GM18951 (cell line): ENCODE measurements at regions of chr10 and their contacts with region 1.

Region 1: GRCh38 chr10:75099952-75100763 is 11.3 kb upstream of the SAMD8 start:
- POLR2A ChIP-seq: no peak

Region 2: DNA sequence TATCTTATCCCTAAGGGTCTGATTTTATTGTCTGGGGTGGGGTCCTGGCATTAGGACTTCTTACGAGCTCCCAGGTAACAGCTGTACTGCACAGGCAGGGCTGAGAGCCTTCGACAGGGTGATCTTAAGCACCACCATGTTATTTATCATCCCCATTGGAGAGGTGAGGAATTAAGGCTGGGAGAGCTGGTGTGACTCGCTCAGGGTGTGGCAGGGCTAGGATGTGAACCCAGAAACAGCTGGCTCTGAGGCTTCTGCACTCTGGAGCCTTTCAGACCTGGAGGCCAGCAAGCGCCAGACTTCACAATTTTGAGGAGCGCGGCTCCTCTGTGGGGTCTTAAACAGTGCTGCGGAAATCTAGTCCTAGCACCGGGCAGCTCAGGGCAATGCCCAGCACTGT is 1261.3 kb before region 1 on chr10:
- in situ Hi-C with region 1: no loop called
- POLR2A ChIP-seq: no peak

Region 3: GRCh38 chr10:74244097-74244685 is 856.0 kb before region 1 on chr10:
- in situ Hi-C with region 1: loop called (anchors 10 kb)
- POLR2A ChIP-seq: no peak

Region 4: GRCh38 chr10:74262856-74263255 is 837.3 kb before region 1 on chr10:
- in situ Hi-C with region 1: loop called (anchors 10 kb)
- POLR2A ChIP-seq: no peak

Region 5: GRCh38 chr10:76086761-76087639 is 986.8 kb after region 1 on chr10:
- in situ Hi-C with region 1: no loop called
- POLR2A ChIP-seq: no peak